Activated naive CD4-positive, alpha-beta T cell treated with anti-CD3 and anti-CD28 coated beads for 36 hours (primary cell): ENCODE measurements at regions of chr7 and their contacts with region 1.

Region 1: DNA sequence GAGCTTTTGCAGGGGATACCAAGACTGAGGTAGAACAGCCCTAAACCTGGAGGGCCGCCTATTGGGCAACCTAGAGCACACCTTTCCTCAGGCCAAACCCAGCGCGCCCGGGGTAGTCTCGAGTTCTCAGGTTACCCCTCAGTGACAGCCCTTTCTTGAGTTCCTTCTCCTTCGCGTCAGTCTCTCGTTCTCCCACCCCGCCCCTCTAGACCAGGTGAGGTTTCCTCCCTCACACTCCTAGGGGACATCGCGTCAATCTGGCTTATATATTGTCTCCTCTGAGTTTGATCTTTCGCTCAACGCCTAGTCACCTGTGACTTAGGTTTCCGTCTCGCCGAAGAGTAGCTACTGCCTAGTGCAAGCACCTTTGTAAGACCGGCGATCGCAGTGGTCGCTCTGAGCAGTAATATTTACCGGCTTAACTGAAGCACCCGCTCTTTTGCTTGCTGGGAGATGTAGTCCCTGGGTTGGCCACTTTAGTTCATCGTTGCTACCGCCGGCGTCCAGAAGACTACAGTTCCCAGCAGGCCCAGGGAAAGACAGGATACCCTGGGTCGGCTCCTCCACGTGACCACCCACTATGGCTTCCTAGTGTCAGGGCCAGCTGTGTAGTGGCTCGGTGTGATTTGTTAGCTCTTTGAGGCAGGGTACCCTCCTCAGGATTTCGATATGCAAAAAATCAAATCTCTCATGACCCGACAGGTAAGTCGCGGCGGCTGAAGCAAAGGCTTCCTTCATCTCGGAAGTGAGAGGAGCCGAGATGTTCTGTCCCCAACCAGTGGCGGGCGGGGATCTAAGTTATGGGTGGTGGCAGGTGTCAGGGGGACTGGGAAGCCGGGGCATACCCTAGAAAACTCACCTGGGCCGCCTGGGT is at the start of gene VPS50:
- DNase-seq: peak; percentile 96
- H3K4me3 Mint-ChIP-seq: peak within 1 kb of the TSS; percentile 96
- H3K27ac Mint-ChIP-seq: peak within 1 kb of the TSS; percentile 83
- H3K4me1 Mint-ChIP-seq: peaks cover 10% of the 10 kb centered on the region
- H3K27me3 Mint-ChIP-seq: no peaks in the 10 kb centered on the region
- total RNA-seq, gene VPS50: 15.0 to 15.8 TPM

Region 2: DNA sequence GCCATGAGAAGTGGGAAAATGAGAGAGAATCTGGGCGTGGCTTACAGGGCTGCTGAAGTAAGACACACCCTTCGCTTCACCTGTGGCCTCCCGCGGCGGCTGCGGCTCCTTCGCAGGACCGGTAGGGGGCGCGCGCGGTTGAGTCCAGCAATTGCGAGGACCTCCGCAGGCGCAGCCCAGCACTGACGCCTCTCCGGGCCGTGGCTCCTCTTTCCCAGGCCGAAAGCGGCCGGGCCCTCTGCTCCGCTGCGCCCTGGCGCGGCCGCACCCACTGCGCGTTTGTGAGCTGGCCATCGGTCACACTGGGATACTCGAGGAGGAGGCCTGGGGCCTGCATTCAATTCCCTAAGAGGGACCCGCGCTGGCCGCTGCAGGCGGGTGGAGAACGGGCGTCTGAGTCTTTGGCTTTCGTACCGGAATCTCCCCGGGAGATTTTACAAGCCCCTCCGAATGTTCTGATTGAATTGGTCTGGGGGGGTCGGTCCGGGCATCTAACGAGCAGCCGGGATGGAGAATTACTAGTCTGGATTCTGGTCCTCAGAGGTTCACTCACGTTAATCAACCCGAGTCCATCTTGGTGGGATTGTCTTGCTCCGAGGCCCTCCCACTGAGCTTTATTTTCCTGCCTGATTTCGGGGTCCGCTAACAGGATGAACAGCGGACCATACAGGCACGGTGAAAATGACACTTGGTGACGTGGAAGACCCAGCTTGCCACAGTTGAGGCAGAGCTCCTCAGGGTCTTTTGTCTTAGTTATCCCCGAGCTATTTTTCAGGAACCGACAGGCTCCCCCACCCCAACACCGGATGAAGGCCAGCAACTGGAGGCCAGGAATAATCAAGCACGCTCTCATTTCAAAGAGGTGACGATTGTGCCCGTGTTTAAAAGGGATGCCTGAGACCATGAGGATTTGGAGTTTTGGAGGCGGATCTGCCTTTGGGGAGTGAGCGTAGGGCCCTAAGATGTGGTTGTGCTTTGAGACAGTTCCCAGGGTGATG is 1052.8 kb before region 1 on chr7 and contains the start of gene LRRD1:
- CTCF ChIA-PET with region 1: no interaction called
- intact Hi-C with region 1: loop called (anchors 5 kb)
- DNase-seq: peak; percentile 94
- H3K4me3 Mint-ChIP-seq: peak within 1 kb of the TSS; percentile 72
- H3K27ac Mint-ChIP-seq: no peak within 1 kb of the TSS
- H3K4me1 Mint-ChIP-seq: peaks cover 10% of the 10 kb centered on the region
- H3K27me3 Mint-ChIP-seq: peaks cover 3% of the 10 kb centered on the region
- total RNA-seq, gene LRRD1: not detected

Region 3: GRCh38 chr7:92590711-92591310 is 641.2 kb before region 1 on chr7:
- CTCF ChIA-PET with region 1: no interaction called
- intact Hi-C with region 1: loop called (anchors 1 kb)
- DNase-seq: no peak
- H3K4me3 Mint-ChIP-seq: peak overlapping the region; percentile 86
- H3K27ac Mint-ChIP-seq: no peak overlapping the region
- H3K4me1 Mint-ChIP-seq: peaks cover 39% of the 10 kb centered on the region
- H3K27me3 Mint-ChIP-seq: peaks cover 3% of the 10 kb centered on the region

Region 4: DNA sequence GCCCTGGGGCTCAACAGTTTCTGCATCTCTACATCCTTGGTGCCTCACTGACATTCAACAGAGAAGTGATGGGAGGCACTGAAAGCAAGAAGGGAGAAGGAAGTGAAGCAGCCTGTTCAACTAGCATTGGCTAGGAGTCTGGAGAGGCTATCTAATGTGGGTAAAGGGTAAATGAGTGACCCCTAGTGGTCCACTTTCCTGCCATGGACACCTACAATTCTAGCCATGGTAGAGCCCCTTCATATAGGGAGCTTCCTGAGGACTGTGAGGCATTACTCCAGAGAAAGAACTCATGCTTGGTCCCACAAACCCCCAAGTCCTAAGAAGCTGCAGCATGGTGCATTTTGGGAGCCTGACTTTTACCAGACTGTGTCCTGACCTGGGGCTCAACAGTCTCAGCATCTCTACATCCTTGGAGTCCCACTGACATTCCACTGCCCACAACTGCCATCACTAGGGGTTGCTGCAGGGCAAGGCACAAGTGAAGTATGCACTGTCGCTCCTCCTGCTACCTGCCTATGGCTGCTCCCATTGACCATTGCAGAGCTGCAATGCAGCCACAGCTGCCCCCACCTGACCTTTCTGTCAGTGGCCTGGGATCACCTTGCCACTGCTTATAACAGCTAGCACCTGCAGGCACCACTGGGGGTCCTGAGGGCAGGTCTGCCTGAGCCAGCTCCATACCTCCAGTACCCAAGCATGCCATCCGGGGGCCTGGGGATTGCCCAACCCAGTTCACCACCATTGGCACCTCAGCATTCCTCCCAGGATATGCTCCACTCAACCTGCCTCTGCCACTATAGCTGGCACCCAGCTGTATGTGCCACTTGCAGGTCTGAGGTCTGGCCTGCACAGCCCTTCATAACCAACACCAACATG is 351.6 kb before region 1 on chr7:
- CTCF ChIA-PET with region 1: no interaction called
- intact Hi-C with region 1: loop called (anchors 1 kb)
- DNase-seq: peak; percentile 43
- H3K4me3 Mint-ChIP-seq: no peak overlapping the region
- H3K27ac Mint-ChIP-seq: no peak overlapping the region
- H3K4me1 Mint-ChIP-seq: peaks cover 34% of the 10 kb centered on the region
- H3K27me3 Mint-ChIP-seq: peaks cover 9% of the 10 kb centered on the region

Region 5: GRCh38 chr7:93147363-93147762 is 84.7 kb before region 1 on chr7:
- CTCF ChIA-PET with region 1: interaction called, 3 read pairs
- intact Hi-C with region 1: loop called (anchors 1 kb)
- DNase-seq: peak; percentile 54
- H3K4me3 Mint-ChIP-seq: peak overlapping the region; percentile 81
- H3K27ac Mint-ChIP-seq: peak overlapping the region; percentile 43
- H3K4me1 Mint-ChIP-seq: peaks cover 22% of the 10 kb centered on the region
- H3K27me3 Mint-ChIP-seq: no peaks in the 10 kb centered on the region

Region 6: DNA sequence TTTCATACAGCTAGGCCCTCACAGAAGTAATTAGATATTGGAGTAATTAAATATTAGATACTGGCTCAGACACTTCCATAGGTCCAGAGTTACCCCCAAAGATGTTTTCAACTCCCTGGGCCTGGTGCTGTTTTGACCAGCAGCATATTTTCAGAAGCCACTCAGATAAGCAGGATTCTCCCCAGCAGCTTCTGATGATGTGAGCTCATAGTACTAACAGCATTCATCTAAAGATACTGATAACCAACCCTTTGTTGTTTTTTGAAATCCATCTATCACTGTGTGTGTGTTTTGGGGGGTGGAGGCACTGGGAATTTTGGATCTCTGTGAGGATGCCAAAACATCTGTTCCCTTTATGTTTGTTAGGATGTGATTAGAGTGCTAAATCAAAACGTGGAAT is 52.9 kb after region 1 on chr7:
- CTCF ChIA-PET with region 1: no interaction called
- intact Hi-C with region 1: no loop called
- DNase-seq: no peak
- H3K4me3 Mint-ChIP-seq: no peak overlapping the region
- H3K27ac Mint-ChIP-seq: no peak overlapping the region
- H3K4me1 Mint-ChIP-seq: no peaks in the 10 kb centered on the region
- H3K27me3 Mint-ChIP-seq: no peaks in the 10 kb centered on the region

Region 7: GRCh38 chr7:94509879-94510581 is 1278.0 kb after region 1 on chr7:
- CTCF ChIA-PET with region 1: no interaction called
- intact Hi-C with region 1: loop called (anchors 1 kb)
- DNase-seq: peak; percentile 66
- H3K4me3 Mint-ChIP-seq: peak overlapping the region; percentile 78
- H3K27ac Mint-ChIP-seq: peak overlapping the region; percentile 83
- H3K4me1 Mint-ChIP-seq: peaks cover 41% of the 10 kb centered on the region
- H3K27me3 Mint-ChIP-seq: no peaks in the 10 kb centered on the region